Motor neuron (in vitro differentiated cells): ENCODE measurements at regions of chr11 and their contacts with region 1.

Region 1: DNA sequence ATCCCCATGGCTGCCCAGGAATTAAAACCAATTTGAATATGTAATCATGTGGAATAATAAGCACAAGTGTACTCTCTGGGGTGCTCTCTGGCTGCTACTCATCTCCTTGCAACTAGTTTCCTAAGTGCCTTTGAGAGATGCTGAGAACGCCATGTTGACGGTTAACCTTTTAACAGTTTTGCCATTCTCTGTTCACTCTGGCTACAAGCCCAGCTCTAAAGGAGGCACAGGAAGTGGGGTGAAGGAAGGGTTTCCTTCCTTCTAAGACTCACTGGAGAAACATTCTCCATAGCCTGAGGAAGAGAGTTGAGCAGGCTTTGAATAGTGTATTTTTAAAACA is 122.0 kb upstream of the ZC3H12C start:
- ATAC-seq: peak in 6 of 8 experiments; percentile 25 to 70 (median 38)
- H3K4me3 ChIP-seq: no peak overlapping the region
- H3K27ac ChIP-seq: no peak overlapping the region
- H3K4me1 ChIP-seq: peaks cover 6 to 14% of the 10 kb centered on the region in 2 donors

Region 2: GRCh38 chr11:110069158-110069737 is 98.1 kb after region 1 on chr11:
- in situ Hi-C with region 1: loop called in 2 of 9 experiments (anchors 25 kb)
- ATAC-seq: peak in 4 of 8 experiments; percentile 43 to 97 (median 94)
- H3K4me3 ChIP-seq: no peak overlapping the region
- H3K27ac ChIP-seq: no peak overlapping the region
- H3K4me1 ChIP-seq: no peaks in the 10 kb centered on the region